Endothelial cell of umbilical vein (primary cell): ENCODE measurements at regions of chr17 and their contacts with region 1.

Region 1: DNA sequence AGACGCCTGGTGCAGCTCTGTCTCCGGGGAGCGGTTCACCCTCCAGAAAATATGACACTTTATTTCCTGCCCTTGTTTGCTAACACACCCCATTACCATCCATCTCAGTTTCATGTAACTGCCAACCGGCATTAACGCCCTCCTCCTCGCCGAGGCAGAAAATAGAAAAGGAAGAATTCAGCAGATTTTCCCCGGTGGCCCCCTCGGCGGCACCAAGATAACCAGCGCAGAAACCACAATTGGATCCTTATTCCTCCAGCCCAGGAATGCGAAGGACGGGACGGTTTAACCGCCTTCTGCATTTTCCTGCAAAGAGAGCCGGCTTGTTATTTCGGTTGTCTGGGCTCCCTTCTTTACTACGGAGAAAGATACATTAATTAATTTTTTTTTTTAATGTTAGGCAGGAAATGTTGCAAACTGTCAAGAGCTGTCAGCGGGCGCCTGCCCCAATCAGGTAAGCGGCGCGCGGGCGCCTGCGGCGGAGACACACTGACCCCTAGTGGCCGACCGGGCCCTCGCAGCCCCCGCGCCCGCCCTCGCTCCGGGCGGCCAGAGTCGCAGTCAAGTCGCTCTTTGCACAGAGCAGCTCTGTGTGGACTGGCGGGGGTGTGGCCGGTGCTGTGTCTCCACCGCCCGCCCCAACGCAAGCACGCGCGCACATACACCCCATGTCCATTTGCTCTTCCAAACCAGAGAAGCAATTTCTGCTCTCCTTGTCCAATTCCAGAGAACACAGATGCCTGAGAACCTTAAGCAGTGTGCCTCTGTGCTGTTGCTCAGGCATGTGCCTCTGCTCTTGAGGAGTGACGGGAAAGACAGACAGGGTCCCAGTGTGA is 53.6 kb downstream of the C17orf67 start:
- DNase-seq: peak; percentile 79
- H3K4me3 ChIP-seq: peak overlapping the region in 2 of 3 experiments; percentile 23 to 54
- H3K27ac ChIP-seq: no peak overlapping the region
- H3K4me1 ChIP-seq: peaks cover 11% of the 10 kb centered on the region
- H3K27me3 ChIP-seq: peaks cover 0 to 5% of the 10 kb centered on the region in 2 experiments
- CTCF ChIP-seq: peak; percentile 96 to 99
- POLR2A ChIP-seq: no peak

Region 2: GRCh38 chr17:56125830-56126819 is 654.0 kb before region 1 on chr17:
- CTCF ChIA-PET with region 1: interaction called, 4 read pairs
- POLR2A ChIA-PET with region 1: no interaction called
- dilution Hi-C with region 1: no loop called
- intact Hi-C with region 1: loop called (anchors 1 kb)
- DNase-seq: peak; percentile 56
- H3K4me3 ChIP-seq: no peak overlapping the region
- H3K27ac ChIP-seq: no peak overlapping the region
- H3K4me1 ChIP-seq: no peaks in the 10 kb centered on the region
- H3K27me3 ChIP-seq: peaks cover 8 to 10% of the 10 kb centered on the region in 2 experiments
- CTCF ChIP-seq: peak; percentile 62 to 65
- POLR2A ChIP-seq: no peak

Region 3: DNA sequence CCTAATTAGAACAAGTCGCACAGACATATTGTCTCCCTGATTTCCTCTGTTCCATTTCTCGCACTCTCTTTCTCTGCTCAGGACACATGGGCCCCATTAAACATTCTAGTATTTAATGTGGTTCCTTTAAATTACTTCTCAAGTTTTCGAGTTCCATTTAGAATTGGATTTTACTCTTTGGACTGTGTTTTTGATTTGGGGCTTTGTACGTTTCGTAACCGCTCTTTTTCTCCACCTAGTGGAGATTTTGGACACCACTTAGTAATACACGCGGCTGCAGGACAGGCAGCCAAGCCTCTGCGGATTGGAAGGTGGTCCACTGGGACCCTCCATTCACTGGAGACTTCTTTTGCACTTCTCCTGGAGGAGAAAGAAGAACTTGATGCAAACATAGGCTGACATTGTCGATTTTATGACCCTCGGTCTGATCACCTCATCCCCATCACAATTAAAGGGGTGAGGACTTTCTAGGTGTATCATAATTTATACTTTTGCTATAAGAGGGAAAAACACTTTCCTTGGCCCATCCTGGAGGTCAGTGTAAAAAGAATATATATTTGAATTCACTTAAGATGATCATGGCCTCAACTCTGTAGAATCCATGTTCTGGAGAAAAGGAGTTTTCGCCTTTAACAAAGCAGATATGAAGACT is 100.9 kb before region 1 on chr17:
- CTCF ChIA-PET with region 1: interaction called, 9 read pairs
- POLR2A ChIA-PET with region 1: interaction called, 3 read pairs
- dilution Hi-C with region 1: no loop called
- intact Hi-C with region 1: loop called (anchors 1 kb)
- DNase-seq: peak; percentile 54
- H3K4me3 ChIP-seq: peak overlapping the region; percentile 19 to 58 (median 21)
- H3K27ac ChIP-seq: no peak overlapping the region
- H3K4me1 ChIP-seq: peaks cover 32% of the 10 kb centered on the region
- H3K27me3 ChIP-seq: peaks cover 27 to 38% of the 10 kb centered on the region in 2 experiments
- CTCF ChIP-seq: peak; percentile 60 to 61
- POLR2A ChIP-seq: no peak

Region 4: DNA sequence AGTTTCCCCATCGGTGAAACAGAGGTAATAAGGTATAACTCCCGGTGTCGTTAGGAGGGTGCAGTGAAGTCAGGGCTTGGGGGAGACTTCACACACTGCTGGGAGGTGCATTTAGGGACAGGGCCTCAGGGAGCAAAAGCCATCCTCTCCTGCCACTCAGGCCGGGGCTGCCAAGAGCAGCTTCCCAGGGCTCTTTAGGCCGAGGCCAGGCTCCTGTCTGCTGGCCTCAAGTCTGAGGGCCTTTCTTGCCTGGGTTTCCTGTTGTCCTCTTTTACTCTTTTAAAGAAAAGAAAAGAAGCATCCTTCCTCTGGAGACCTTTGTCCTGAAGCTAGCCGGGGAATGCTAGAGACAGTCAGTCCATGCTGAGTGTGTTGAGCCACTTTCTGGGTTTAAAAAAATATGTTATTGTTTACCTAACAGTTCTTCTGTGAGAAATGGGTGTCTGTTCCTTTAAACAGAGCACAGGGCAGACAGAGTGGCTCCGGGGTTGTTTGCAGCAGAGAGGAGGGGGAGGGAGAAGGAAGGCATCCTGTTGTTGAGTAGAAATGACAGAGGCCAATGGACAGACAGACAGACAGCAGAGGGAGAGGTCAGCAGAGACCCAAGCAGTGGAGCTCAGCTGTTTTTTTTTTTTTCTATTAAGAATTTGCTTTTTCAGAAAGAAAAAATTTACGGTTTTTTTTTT is 25.4 kb before region 1 on chr17:
- CTCF ChIA-PET with region 1: interaction called, 64 read pairs
- POLR2A ChIA-PET with region 1: no interaction called
- dilution Hi-C with region 1: no loop called
- intact Hi-C with region 1: loop called (anchors 1 kb)
- DNase-seq: peak; percentile 53
- H3K4me3 ChIP-seq: no peak overlapping the region
- H3K27ac ChIP-seq: peak overlapping the region; percentile 86
- H3K4me1 ChIP-seq: peaks cover 47% of the 10 kb centered on the region
- H3K27me3 ChIP-seq: no peaks in the 10 kb centered on the region
- CTCF ChIP-seq: no peak
- POLR2A ChIP-seq: no peak

Region 5: GRCh38 chr17:56851008-56851407 is 70.9 kb after region 1 on chr17:
- CTCF ChIA-PET with region 1: no interaction called
- POLR2A ChIA-PET with region 1: no interaction called
- dilution Hi-C with region 1: no loop called
- intact Hi-C with region 1: no loop called
- DNase-seq: no peak
- H3K4me3 ChIP-seq: no peak overlapping the region
- H3K27ac ChIP-seq: no peak overlapping the region
- H3K4me1 ChIP-seq: peaks cover 5% of the 10 kb centered on the region
- H3K27me3 ChIP-seq: no peaks in the 10 kb centered on the region
- CTCF ChIP-seq: no peak
- POLR2A ChIP-seq: no peak

Region 6: DNA sequence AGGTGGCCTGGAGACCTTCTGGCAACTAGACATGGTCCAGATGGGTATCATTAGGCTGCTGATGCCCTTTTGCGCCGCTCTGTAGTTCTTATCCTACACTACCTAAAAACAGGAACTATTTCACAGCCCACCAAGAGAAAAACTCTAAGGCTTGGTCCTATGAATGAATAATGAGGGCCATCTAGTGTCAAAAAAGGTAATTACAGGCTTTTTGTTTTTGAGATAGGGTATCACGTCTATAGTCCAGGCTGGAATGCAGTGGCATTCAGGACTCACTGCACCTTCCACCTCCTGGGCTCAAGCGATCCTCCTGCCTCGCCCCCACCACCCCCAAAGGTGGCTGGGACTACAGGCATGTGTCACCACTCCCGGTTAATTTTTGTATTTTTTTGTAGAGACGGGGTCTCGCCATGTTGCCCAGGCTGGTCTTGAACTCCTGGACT is 159.8 kb after region 1 on chr17:
- CTCF ChIA-PET with region 1: interaction called, 10 read pairs
- POLR2A ChIA-PET with region 1: no interaction called
- dilution Hi-C with region 1: no loop called
- intact Hi-C with region 1: no loop called
- DNase-seq: peak; percentile 77
- H3K4me3 ChIP-seq: no peak overlapping the region
- H3K27ac ChIP-seq: peak overlapping the region; percentile 35
- H3K4me1 ChIP-seq: peaks cover 24% of the 10 kb centered on the region
- H3K27me3 ChIP-seq: no peaks in the 10 kb centered on the region
- CTCF ChIP-seq: peak; percentile 51 to 53
- POLR2A ChIP-seq: no peak